A549 (cell line): ENCODE measurements at regions of chr15 and their contacts with region 1.

Region 1: GRCh38 chr15:78695854-78696253 is 54.8 kb upstream of the CHRNB4 start:
- DNase-seq: no peak
- ATAC-seq: no peak; a peak in 1 of 6 replicates
- H3K4me3 ChIP-seq: no peak overlapping the region
- H3K27ac ChIP-seq: no peak overlapping the region
- H3K4me1 ChIP-seq: no peaks in the 10 kb centered on the region
- CTCF ChIP-seq: no peak
- EP300 ChIP-seq: no peak
- POLR2A ChIP-seq: no peak
- RAD21 ChIP-seq: no peak

Region 2: GRCh38 chr15:78604420-78604819 is 91.4 kb before region 1 on chr15:
- CTCF ChIA-PET with region 1: no interaction called
- POLR2A ChIA-PET with region 1: no interaction called
- DNase-seq: no peak
- ATAC-seq: peak in 1 of 2 experiments; percentile 33; a peak in 3 of 6 replicates
- H3K4me3 ChIP-seq: no peak overlapping the region
- H3K27ac ChIP-seq: no peak overlapping the region
- H3K4me1 ChIP-seq: no peaks in the 10 kb centered on the region
- CTCF ChIP-seq: no peak
- EP300 ChIP-seq: no peak
- POLR2A ChIP-seq: no peak
- RAD21 ChIP-seq: no peak

Region 3: DNA sequence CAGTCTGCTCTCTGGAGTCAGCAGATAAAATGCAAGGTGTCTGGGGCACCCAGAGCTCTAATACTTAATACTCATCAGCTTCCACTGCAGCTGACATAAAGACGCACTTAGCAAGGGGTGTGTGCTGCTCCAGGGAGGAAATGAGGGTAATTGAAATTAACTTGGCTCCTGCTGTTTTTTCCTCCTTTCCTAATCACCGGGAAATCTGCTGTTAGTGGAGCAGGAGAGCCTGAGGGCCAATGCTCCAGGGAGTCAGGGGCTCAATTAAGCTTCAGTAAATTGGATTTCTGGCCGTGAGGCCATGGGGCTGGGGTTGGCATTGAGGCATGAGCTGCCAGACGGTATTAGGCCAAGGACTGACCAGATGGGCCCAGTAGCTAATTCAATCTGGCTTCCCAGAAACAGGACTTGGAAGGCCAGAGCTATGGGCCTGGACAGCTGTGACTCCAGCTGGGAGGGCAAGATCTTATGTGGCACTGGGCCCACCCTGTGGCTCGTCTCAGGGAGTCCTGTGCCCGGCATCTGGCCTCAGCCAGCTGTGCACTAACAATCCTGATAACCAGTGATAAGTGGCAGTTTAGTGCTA is 24.1 kb before region 1 on chr15:
- CTCF ChIA-PET with region 1: interaction called, 11 read pairs
- POLR2A ChIA-PET with region 1: no interaction called
- DNase-seq: no peak
- ATAC-seq: no peak
- H3K4me3 ChIP-seq: no peak overlapping the region
- H3K27ac ChIP-seq: peak overlapping the region in 1 of 2 experiments; percentile 61; a peak in 3 of 6 replicates
- H3K4me1 ChIP-seq: peaks cover 6% of the 10 kb centered on the region; the same call in 1 of the 3 replicates
- CTCF ChIP-seq: no peak
- EP300 ChIP-seq: no peak
- POLR2A ChIP-seq: no peak
- RAD21 ChIP-seq: no peak